ENCODE measurements at regions of chr4 and their contacts with region 1.

Region 1: DNA sequence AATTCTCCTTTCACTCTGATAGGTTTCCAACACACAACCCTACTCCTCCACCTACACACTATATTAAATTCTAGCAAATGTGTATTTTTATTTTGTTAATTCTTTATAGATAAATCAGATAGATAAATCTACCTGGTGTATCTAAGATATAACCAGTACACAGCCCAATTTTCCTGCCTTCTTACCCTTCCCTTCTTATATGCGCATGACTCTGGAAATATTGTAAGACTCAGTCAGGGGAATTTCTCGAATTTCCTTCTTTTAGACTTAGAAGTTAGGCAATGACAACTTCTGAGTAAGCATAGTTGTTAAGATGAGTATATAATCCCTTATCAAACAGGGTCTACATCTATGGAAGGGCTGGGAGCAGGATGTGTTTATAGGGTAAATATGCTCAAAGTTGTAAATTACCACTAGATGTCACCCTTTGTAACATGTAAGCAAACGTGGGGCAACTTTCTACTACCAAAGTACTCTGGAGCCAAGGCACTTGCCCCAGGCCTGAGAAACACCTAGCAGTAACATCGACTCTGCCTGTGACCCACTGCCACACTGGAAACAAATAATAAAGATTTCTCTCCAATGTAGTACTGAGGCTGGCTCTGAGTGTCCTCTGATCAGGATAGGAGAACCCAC is 444.7 kb downstream of the IQCM start:
- DNase-seq: peak in 1 of 6 donors; percentile 9
- ATAC-seq: peak in 3 of 4 donors; percentile 69 to 75 (median 71)
- H3K4me3 ChIP-seq: no peak overlapping the region
- H3K27ac ChIP-seq: no peak overlapping the region
- H3K4me1 ChIP-seq: no peaks in the 10 kb centered on the region
- H3K27me3 ChIP-seq: no peaks in the 10 kb centered on the region
- CTCF ChIP-seq: no peak

Region 2: DNA sequence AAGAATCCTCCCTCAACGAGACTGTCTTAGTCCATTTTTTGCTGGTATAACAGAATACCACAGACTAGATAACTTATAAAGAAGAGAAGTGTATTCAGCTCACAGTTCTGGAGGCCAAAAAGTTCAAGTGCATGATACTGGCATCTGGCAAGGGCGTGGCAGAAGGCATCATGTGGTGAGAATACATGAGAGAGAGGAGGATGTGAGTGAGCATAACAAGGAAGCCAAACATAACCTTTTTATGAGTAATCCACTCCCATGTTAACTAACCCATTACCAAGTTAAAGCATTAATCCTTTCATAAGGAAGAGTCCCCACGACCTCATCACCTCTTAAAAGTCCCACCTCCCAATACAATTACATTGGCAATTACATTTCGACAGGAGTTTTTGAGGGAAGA is 59.8 kb before region 1 on chr4:
- intact Hi-C with region 1: no loop called
- DNase-seq: no peak
- ATAC-seq: no peak
- H3K4me3 ChIP-seq: no peak overlapping the region
- H3K27ac ChIP-seq: no peak overlapping the region
- H3K4me1 ChIP-seq: no peaks in the 10 kb centered on the region
- H3K27me3 ChIP-seq: no peaks in the 10 kb centered on the region
- CTCF ChIP-seq: no peak

Region 3: DNA sequence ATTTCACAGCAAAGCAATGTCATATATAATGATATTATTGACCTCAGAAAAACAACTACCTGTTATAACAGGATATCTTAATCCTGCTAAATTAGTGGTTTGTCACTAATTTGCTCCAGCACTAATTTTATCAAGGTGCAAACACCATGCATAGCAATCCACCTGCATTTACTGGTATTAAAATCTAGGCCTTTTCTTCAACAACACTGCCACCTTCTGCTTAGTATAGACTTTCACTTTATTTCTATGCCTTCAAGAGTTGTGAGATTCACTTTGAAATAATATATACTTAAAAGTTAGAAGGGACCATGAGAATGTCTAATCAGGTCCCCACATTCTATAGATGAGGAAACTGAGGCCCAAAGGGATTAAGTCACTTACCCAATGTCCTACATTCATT is 526.9 kb after region 1 on chr4:
- intact Hi-C with region 1: loop called in 1 of 3 experiments (anchors 5 kb)
- DNase-seq: no peak
- ATAC-seq: peak in 3 of 4 donors; percentile 37 to 54 (median 53)
- H3K4me3 ChIP-seq: no peak overlapping the region
- H3K27ac ChIP-seq: no peak overlapping the region
- H3K4me1 ChIP-seq: no peaks in the 10 kb centered on the region
- H3K27me3 ChIP-seq: peaks cover 0 to 5% (median 0%) of the 10 kb centered on the region in 4 donors
- CTCF ChIP-seq: peak in 3 of 4 donors; percentile 7 to 11 (median 7)

Measured in pancreas (tissue), 10 donors.